ENCODE measurements at regions of chr20 and their contacts with region 1.

Region 1: DNA sequence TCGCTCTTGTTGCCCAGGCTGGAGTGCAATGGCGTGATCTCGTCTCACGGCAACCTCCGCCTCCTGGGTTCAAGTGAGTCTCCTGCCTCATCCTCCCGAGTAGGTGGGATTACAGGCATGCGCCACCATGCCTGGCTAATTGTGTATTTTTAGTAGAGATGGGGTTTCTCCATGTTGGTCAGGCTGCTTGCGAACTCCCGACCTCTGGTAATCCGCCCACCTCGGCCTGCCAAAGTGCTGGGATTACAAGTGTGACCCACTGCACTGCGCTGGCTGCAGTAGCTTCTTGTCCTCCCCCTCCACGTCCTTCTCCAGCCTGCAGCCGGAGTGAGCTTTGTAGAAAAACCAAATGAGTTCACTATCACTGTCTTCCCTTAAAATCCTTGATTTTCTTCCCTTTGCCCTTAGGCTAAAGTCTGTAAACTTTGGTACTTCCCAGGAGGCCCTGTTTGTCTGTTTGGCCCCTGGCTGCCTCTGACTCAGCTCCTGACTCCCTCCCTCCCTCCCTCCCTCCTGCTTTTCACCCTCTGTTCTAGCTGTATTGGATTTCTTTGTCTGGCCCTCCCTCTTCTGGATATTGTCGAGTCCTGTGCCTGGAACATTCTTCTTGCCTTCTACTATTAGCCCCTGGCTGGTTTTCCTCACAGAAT is 12.9 kb downstream of the PARD6B start:
- DNase-seq: peak; percentile 92
- ATAC-seq: peak; percentile 83
- H3K4me3 ChIP-seq: peak overlapping the region; percentile 22; the same call in 1 of the 2 replicates
- H3K27ac ChIP-seq: peak overlapping the region; percentile 67
- H3K4me1 ChIP-seq: peaks cover 59% of the 10 kb centered on the region
- H3K27me3 ChIP-seq: no peaks in the 10 kb centered on the region
- CTCF ChIP-seq: peak; percentile 69

Region 2: DNA sequence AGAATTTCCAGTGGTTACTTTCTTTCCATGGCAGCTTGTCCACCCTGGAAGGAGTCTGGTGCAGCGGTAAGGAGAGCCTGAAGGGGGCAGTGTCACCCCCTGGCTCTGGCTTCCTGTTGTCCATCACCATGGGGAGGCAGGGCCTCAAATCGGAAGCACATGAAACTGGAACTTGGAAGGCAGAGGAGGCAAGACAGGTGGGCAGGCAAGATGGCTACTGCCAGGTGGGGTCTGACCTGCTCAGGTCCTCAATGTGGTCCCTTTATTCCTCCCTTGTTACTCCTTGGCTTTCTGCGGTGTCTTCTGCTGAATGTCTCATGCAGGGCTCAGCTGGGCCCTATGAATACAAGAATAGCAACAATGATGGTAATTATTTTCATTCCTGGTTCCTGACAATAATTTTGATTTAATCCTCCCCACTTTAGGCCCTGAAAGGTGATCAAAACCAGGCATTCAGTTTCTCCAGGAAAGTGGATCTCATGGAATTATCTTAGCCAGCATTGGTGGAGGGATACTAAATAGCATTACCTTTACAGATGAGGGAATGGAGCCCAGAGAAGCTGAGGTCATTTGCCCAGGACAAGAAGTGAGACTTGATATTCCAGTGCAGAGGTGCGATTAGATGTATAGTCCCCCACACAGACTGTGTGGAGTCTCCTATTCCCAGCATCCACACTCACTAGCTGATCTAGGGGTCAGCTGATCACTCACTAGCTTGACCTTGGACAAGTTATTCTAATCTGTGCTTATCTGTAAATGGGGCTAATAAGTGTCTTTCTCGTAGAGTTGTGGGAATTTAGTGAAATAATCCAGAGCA is 779.1 kb before region 1 on chr20:
- CTCF ChIA-PET with region 1: no interaction called
- POLR2A ChIA-PET with region 1: interaction called, 30 read pairs
- intact Hi-C with region 1: no loop called
- DNase-seq: peak; percentile 69
- ATAC-seq: no peak
- H3K4me3 ChIP-seq: no peak overlapping the region
- H3K27ac ChIP-seq: no peak overlapping the region
- H3K4me1 ChIP-seq: peaks cover 30% of the 10 kb centered on the region
- H3K27me3 ChIP-seq: no peaks in the 10 kb centered on the region
- CTCF ChIP-seq: peak; percentile 88

Region 3: GRCh38 chr20:50509935-50510705 is 234.1 kb before region 1 on chr20 and contains the start of gene PTPN1:
- CTCF ChIA-PET with region 1: no interaction called
- POLR2A ChIA-PET with region 1: interaction called, 16 read pairs
- intact Hi-C with region 1: no loop called
- DNase-seq: peak; percentile 100
- ATAC-seq: peak; percentile 96
- H3K4me3 ChIP-seq: peak within 1 kb of the TSS; percentile 83
- H3K27ac ChIP-seq: peak within 1 kb of the TSS; percentile 38
- H3K4me1 ChIP-seq: peaks cover 37% of the 10 kb centered on the region
- H3K27me3 ChIP-seq: no peaks in the 10 kb centered on the region
- CTCF ChIP-seq: no peak
- total RNA-seq, gene PTPN1: 47.2 and 47.7 TPM in 2 replicates

Region 4: GRCh38 chr20:50625986-50626677 is 118.1 kb before region 1 on chr20:
- CTCF ChIA-PET with region 1: interaction called, 45 read pairs
- POLR2A ChIA-PET with region 1: interaction called, 6 read pairs
- intact Hi-C with region 1: loop called (anchors 1 kb)
- DNase-seq: peak; percentile 72
- ATAC-seq: peak; percentile 70
- H3K4me3 ChIP-seq: no peak overlapping the region
- H3K27ac ChIP-seq: no peak overlapping the region
- H3K4me1 ChIP-seq: peaks cover 9% of the 10 kb centered on the region
- H3K27me3 ChIP-seq: no peaks in the 10 kb centered on the region
- CTCF ChIP-seq: peak; percentile 98

Region 5: GRCh38 chr20:50663095-50663850 is 81.0 kb before region 1 on chr20:
- CTCF ChIA-PET with region 1: interaction called, 22 read pairs
- POLR2A ChIA-PET with region 1: no interaction called
- intact Hi-C with region 1: no loop called
- DNase-seq: peak; percentile 83
- ATAC-seq: peak; percentile 57
- H3K4me3 ChIP-seq: no peak overlapping the region
- H3K27ac ChIP-seq: peak overlapping the region; percentile 43
- H3K4me1 ChIP-seq: peaks cover 44% of the 10 kb centered on the region
- H3K27me3 ChIP-seq: no peaks in the 10 kb centered on the region
- CTCF ChIP-seq: peak; percentile 59

Region 6: DNA sequence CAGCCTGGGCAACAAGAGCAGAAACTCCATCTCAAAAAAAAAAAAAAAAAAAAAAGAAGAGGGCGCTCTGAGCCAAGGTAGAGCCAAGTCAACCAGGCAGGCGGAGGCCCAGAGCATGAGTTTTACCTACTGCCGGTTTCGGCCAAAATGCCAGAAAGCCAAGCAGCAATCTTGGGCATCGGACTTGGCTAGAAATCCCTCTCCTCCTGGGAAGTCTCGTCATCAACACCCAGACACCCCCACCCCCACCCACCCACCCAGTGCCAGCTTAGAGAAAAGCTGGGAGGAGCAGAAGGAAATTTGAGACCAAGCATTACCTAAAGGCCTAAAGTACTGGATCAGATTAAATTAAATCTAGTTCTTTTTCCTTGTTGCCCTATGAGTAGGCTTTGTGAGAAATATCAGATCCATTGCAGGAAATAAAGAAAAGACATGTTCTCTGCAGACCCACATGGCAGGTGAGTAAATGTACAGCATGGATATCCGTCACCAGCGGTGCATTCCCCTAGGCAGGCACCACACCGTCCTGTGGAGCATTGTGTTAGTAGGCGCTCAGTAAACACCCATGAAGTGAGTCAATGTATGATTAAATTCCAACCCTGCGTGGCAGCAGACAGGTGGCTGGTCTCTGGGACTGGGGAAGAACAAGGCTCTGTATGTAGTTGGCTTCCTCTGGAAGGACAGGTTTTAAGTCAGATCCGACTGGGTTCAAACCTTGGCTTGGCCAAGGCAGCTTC is 74.0 kb before region 1 on chr20:
- CTCF ChIA-PET with region 1: interaction called, 9 read pairs
- POLR2A ChIA-PET with region 1: interaction called, 13 read pairs
- intact Hi-C with region 1: no loop called
- DNase-seq: peak; percentile 98
- ATAC-seq: peak; percentile 100
- H3K4me3 ChIP-seq: no peak overlapping the region
- H3K27ac ChIP-seq: peak overlapping the region; percentile 60
- H3K4me1 ChIP-seq: peaks cover 22% of the 10 kb centered on the region
- H3K27me3 ChIP-seq: no peaks in the 10 kb centered on the region
- CTCF ChIP-seq: no peak

Region 7: GRCh38 chr20:50731055-50731871 is 13.0 kb before region 1 on chr20 and contains the start of gene PARD6B:
- CTCF ChIA-PET with region 1: interaction called, 12 read pairs
- POLR2A ChIA-PET with region 1: interaction called, 5 read pairs
- intact Hi-C with region 1: loop called (anchors 2 kb)
- DNase-seq: peak; percentile 100
- ATAC-seq: peak; percentile 83
- H3K4me3 ChIP-seq: peak within 1 kb of the TSS; percentile 79
- H3K27ac ChIP-seq: peak within 1 kb of the TSS; percentile 6; the same call in 1 of the 2 replicates
- H3K4me1 ChIP-seq: peaks cover 60% of the 10 kb centered on the region
- H3K27me3 ChIP-seq: no peaks in the 10 kb centered on the region
- CTCF ChIP-seq: no peak
- total RNA-seq, gene PARD6B: 3.7 and 4.3 TPM in 2 replicates